ENCODE measurements at regions of chr11 and their contacts with region 1.

Region 1: GRCh38 chr11:57657194-57658022 is at the start of gene CLP1:
- DNase-seq: peak; percentile 100
- H3K4me3 Mint-ChIP-seq: peak within 1 kb of the TSS; percentile 100
- H3K27ac Mint-ChIP-seq: peak within 1 kb of the TSS; percentile 94
- H3K4me1 Mint-ChIP-seq: peaks cover 33% of the 10 kb centered on the region
- H3K27me3 Mint-ChIP-seq: no peaks in the 10 kb centered on the region
- total RNA-seq, gene CLP1: 13.9 to 15.2 TPM

Region 2: DNA sequence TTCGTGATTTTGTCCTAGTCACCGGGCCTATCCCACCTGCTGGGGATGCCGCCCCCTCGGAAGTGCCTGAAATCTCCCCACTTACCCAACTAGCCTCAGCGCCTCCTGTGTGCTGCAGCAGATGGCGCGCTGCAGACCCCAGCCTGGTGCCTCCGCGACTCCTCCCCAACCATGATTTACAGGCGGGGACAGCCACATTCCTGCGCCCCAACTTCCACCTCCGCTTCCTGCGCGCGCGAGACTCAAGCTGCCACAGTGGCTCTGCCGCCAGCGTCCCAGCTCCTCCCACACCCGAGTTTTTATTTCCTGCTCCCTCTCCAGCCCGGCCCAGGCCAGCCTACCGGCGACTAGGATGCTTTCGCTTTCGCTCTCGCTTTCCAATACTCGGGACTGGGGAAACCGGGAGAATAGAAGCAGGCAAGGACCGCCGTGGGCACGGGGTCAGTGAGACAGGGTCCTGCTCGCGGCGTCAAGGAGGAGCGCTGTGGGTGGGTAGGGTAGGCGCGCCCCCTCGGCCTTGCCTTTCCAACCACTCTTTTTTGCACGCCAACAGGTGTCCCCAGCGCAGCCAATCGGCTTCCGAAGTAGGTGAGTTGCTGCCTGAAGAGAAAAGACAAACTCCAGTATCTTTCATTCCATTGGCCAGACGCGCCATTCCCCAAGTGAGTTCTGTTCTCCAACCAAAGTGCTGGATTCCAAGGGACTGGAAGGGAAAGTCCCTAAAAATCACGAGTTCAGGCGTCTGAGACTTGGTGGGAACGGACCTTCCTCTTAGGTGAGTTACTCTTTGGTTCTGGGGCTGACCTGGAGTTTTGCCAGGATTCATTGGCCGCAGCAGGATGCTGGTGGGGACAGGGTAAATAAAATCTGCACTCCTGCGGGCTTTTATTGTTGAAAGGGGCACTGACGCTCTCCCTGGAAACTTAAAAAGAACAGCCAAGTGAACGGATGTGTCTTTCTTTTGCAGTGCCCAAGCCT is 1485.4 kb after region 1 on chr11 and contains the start of gene FAM111A:
- CTCF ChIA-PET with region 1: no interaction called
- POLR2A ChIA-PET with region 1: no interaction called
- intact Hi-C with region 1: loop called (anchors 5 kb)
- DNase-seq: peak; percentile 90
- H3K4me3 Mint-ChIP-seq: peak within 1 kb of the TSS; percentile 94
- H3K27ac Mint-ChIP-seq: peak within 1 kb of the TSS; percentile 93
- H3K4me1 Mint-ChIP-seq: peaks cover 50% of the 10 kb centered on the region
- H3K27me3 Mint-ChIP-seq: no peaks in the 10 kb centered on the region
- total RNA-seq, gene FAM111A: 87.6 to 87.8 TPM